ENCODE measurements at regions of chr1 and their contacts with region 1.

Region 1: GRCh38 chr1:7515175-7515574 is 255.9 kb upstream of the VAMP3 start:
- DNase-seq: no peak

Region 2: DNA sequence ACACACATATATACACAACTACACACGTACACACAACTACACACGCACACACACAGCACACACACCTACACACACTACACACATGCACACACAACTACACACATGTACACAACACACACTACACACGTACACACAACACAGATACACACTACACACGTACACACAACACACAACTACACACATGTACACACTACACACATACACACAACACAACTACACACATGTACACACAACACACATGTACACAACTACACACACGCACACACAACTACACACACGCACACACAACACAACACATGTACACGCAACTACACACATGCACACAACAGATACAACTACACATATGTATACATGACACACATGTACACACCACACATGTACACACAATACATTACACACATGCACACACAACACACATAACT is 411.8 kb before region 1 on chr1:
- intact Hi-C with region 1: loop called in 1 of 2 experiments (anchors 2 kb)
- DNase-seq: no peak

Region 3: DNA sequence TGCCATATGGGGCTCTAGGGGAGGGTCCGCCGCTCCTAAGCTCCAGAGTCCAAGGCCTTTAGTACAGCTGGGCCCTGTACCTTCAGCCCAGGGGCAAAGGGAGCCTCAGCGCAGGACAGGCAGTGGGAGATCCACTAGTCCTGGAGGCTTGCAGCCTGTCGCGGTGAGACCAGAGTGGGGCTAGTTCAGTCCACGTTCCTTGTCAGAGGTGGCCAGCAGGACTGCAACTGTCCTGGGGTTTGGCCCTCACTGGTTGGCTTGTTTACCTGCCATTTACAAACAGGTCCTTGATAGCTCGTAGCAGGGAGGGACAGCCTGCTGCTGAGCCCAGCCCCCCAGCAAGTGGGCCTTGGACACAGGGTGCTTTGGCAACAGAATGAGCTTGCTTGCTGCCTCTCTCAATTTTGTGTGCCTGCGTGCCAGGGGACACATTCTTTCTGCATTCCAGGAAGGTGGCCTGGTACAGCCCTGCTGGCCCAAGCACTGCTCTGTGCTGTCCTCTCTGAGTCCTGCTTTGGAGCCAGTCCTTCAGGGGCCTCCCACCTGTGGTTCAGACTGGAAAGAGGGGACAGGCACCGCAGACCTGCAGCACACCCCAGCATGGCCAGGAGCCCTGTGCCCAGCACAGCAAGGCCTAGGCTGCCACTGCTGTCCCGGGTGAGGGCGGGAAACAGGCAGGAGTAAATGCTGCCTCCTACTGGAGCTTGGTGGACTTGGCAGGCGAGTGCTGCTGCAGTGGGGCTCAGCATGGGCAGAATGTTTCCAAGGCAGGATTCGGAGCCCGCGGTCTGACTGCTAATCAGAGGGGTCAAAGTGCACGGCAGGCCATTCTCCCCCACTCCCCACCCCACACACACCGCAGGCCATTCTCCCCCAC is 1734.6 kb after region 1 on chr1:
- intact Hi-C with region 1: no loop called
- DNase-seq: no peak

Measured in posterior vena cava (tissue), 2 donors.